Motor neuron (in vitro differentiated cells): ENCODE measurements at regions of chr12 and their contacts with region 1.

Region 1: DNA sequence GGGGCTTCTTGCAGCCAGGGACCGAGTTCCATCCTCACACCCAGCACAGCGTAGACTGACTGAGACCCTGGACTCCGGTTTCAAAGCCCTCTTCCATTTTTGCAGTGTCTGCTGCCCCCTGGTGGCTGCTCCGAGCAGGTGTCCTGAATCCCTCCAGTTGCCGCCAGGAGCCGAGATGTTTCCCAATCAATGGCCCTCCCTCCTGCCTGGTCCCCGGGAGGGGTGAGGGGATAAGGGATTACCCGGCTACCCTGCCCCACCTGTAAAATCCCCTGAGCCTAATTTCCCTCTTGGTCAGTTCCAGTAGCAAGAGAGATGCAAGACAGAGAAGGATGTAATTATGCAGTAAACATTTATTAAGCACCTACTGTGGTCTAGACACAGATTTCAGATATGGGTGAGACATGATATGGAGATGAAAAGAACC is 55.0 kb downstream of the PHETA1 start:
- ATAC-seq: peak; percentile 79 to 97 (median 92)
- H3K4me3 ChIP-seq: no peak overlapping the region
- H3K27ac ChIP-seq: no peak overlapping the region
- H3K4me1 ChIP-seq: no peaks in the 10 kb centered on the region

Region 2: GRCh38 chr12:110906083-110906482 is 407.8 kb before region 1 on chr12:
- in situ Hi-C with region 1: loop called in 1 of 9 experiments (anchors 10 kb)
- ATAC-seq: no peak
- H3K4me3 ChIP-seq: no peak overlapping the region
- H3K27ac ChIP-seq: no peak overlapping the region
- H3K4me1 ChIP-seq: peaks cover 0 to 7% of the 10 kb centered on the region in 2 donors

Region 3: GRCh38 chr12:110937104-110937641 is 376.7 kb before region 1 on chr12:
- in situ Hi-C with region 1: loop called in 6 of 9 experiments (anchors 10 to 25 kb)
- ATAC-seq: peak; percentile 42 to 73 (median 61)
- H3K4me3 ChIP-seq: no peak overlapping the region
- H3K27ac ChIP-seq: no peak overlapping the region
- H3K4me1 ChIP-seq: no peaks in the 10 kb centered on the region

Region 4: DNA sequence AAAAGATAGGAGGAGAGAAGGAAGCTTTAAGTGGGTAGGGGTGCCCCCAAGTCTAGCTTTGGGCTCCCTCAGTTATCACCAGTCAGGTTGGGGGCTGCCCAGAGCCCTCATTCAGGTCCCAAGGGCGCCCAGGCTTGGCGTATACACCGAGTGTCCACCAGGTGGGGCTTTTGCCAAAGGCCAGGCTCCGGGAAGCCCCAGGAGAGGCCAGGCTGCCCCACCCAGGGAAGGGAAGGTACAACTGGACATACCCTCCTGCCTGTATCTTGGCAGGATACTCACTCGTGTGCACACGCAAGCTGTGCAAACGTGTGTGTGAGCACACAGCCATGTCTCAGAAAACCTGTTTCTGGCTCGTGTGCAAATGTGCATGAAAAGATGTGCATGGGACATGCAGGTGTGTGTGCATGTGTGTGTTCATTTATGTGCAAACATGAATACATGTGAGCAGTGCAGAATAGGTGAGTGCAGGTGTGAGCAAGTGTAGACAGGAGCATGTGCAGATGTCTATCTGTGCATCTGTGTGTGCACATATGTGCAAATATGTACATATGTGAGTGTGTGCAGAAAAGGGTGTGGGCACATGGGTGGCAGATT is 289.5 kb before region 1 on chr12:
- in situ Hi-C with region 1: loop called in 4 of 9 experiments (anchors 10 to 25 kb)
- ATAC-seq: peak; percentile 86 to 99 (median 94)
- H3K4me3 ChIP-seq: no peak overlapping the region
- H3K27ac ChIP-seq: no peak overlapping the region
- H3K4me1 ChIP-seq: no peaks in the 10 kb centered on the region

Region 5: DNA sequence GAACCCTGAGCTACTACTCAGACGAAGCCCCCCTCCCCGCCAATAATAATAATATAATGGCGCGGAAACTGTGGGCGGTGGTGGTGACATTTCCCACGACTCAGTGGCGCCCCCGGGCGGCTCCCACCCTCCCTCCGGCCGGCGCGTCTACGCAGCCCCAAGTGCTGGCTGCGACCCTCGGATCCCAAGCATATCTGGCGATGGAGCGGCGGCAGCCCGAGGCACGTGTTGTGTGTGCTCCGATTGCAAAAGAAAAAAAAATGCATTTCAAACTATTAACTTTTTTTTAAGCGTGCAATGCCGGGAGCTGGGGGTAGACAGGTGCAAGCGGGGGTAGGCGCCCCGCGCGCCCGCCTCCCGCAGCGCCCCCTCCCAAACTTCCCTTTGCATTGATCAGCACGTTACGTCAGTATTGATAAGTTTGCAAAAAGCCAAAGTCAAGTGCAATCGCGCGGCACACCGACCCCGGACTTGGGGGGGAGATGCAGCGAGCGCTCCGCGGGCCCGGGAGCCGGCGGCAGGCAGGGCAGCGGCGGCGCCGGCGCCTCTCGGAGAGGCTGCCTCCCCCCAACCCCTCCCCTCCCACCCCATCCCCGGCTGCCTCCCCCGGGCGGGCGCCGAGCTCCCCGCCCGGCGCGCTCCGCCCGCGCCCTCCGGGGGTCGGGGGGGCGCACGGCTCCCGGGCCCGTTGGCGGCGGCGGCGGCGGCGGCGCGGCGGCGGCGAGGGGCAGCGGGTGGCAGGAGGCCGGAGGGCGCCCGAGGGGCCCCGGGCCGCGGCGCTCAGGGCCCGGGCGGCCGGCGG is 280.4 kb before region 1 on chr12:
- in situ Hi-C with region 1: loop called in 3 of 9 experiments (anchors 10 to 25 kb)
- ATAC-seq: peak in 5 of 8 experiments; percentile 60 to 72 (median 68)
- H3K4me3 ChIP-seq: peak overlapping the region; percentile 75 to 99 (median 90)
- H3K27ac ChIP-seq: peak overlapping the region; percentile 84 to 93
- H3K4me1 ChIP-seq: peaks cover 9 to 25% of the 10 kb centered on the region in 2 donors

Region 6: DNA sequence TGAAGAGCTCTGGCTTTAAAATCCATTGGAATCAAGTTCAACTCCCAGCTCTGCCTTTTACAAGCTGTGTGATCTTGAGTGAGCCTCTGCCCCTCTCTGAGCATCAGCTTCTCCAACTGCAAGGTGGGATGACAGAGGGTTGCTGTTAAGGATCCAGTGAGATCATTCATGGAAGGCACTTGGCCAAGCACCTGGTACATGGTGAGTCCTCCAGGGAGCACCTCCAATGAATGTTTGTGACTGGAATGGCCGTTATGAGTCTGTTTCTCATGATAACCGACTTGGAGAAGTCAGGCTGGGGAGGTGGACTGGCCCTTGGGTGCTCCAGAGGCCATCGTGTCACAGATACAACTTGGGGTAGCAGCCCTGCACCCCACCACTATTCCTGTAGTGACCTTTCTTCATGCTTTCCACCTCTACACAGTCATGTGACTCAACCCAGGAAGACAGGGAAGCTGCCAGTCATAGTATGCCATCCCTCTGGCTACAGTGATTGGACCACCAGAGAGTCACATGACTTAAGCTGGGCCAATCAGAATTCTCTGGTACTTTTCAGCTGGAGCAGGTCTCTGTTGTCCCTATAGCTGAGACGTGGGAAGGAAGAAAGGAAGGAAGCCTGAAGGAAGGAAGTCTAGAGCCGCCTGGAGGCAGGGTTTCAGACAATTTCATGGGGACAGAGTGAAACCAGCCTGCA is 247.0 kb before region 1 on chr12:
- in situ Hi-C with region 1: no loop called
- ATAC-seq: peak in 6 of 8 experiments; percentile 13 to 69 (median 32)
- H3K4me3 ChIP-seq: no peak overlapping the region
- H3K27ac ChIP-seq: no peak overlapping the region
- H3K4me1 ChIP-seq: peaks cover 11 to 21% of the 10 kb centered on the region in 2 donors

Region 7: GRCh38 chr12:111174251-111174960 is 139.4 kb before region 1 on chr12:
- in situ Hi-C with region 1: no loop called
- ATAC-seq: no peak
- H3K4me3 ChIP-seq: no peak overlapping the region
- H3K27ac ChIP-seq: peak overlapping the region; percentile 0 to 37
- H3K4me1 ChIP-seq: peaks cover 31 to 46% of the 10 kb centered on the region in 2 donors

Region 8: GRCh38 chr12:111715279-111715678 is 401.4 kb after region 1 on chr12:
- in situ Hi-C with region 1: no loop called
- ATAC-seq: peak in 4 of 8 experiments; percentile 22 to 96 (median 70)
- H3K4me3 ChIP-seq: no peak overlapping the region
- H3K27ac ChIP-seq: no peak overlapping the region
- H3K4me1 ChIP-seq: peaks cover 0 to 5% of the 10 kb centered on the region in 2 donors